CD4-positive, alpha-beta memory T cell (primary cell): ENCODE measurements at regions of chr15 and their contacts with region 1.

Region 1: GRCh38 chr15:78750566-78750965 is 60.7 kb downstream of the ADAMTS7 start:
- DNase-seq: peak in 1 of 5 donors; percentile 5
- H3K4me3 ChIP-seq: no peak overlapping the region
- H3K4me3 Mint-ChIP-seq: peak overlapping the region in 6 of 8 donors; percentile 36 to 73 (median 51)
- H3K27ac ChIP-seq: no peak overlapping the region
- H3K27ac Mint-ChIP-seq: peak overlapping the region in 2 of 7 donors; percentile 46 to 57
- H3K4me1 ChIP-seq: no peaks in the 10 kb centered on the region
- H3K4me1 Mint-ChIP-seq: peaks cover 2 to 9% (median 4%) of the 10 kb centered on the region in 4 donors
- H3K27me3 ChIP-seq: no peaks in the 10 kb centered on the region
- H3K27me3 Mint-ChIP-seq: no peaks in the 10 kb centered on the region

Region 2: GRCh38 chr15:78629031-78629715 is 121.4 kb before region 1 on chr15:
- CTCF ChIA-PET with region 1: no interaction called
- POLR2A ChIA-PET with region 1: no interaction called
- intact Hi-C with region 1: no loop called
- DNase-seq: no peak
- H3K4me3 ChIP-seq: no peak overlapping the region
- H3K4me3 Mint-ChIP-seq: no peak overlapping the region
- H3K27ac ChIP-seq: no peak overlapping the region
- H3K27ac Mint-ChIP-seq: no peak overlapping the region
- H3K4me1 ChIP-seq: no peaks in the 10 kb centered on the region
- H3K4me1 Mint-ChIP-seq: no peaks in the 10 kb centered on the region
- H3K27me3 ChIP-seq: no peaks in the 10 kb centered on the region
- H3K27me3 Mint-ChIP-seq: peaks cover 12 to 44% of the 10 kb centered on the region in 2 donors

Region 3: DNA sequence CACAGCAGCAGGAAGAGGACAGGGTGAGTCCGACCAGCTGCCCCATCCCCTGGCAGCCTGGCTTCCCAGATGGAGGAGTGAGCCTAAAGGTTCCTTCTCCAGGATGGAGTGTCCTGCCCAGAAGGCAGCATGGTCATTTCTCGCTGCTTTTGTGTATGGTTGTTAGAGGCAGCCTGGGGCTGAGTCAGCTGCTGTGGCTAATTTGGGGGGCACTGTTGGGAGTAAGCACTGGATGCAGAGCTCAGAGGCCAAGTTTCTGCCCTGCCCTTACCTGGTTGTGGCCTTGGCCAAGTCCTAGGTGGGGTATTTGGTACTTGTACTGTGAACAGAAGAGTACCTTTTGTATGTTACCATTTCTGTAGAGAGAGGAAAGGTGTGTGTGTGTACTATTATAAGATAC is 17.9 kb before region 1 on chr15:
- CTCF ChIA-PET with region 1: no interaction called
- POLR2A ChIA-PET with region 1: no interaction called
- intact Hi-C with region 1: no loop called
- DNase-seq: no peak
- H3K4me3 ChIP-seq: no peak overlapping the region
- H3K4me3 Mint-ChIP-seq: no peak overlapping the region
- H3K27ac ChIP-seq: no peak overlapping the region
- H3K27ac Mint-ChIP-seq: no peak overlapping the region
- H3K4me1 ChIP-seq: no peaks in the 10 kb centered on the region
- H3K4me1 Mint-ChIP-seq: no peaks in the 10 kb centered on the region
- H3K27me3 ChIP-seq: no peaks in the 10 kb centered on the region
- H3K27me3 Mint-ChIP-seq: peaks cover 8 to 12% of the 10 kb centered on the region in 2 donors

Region 4: DNA sequence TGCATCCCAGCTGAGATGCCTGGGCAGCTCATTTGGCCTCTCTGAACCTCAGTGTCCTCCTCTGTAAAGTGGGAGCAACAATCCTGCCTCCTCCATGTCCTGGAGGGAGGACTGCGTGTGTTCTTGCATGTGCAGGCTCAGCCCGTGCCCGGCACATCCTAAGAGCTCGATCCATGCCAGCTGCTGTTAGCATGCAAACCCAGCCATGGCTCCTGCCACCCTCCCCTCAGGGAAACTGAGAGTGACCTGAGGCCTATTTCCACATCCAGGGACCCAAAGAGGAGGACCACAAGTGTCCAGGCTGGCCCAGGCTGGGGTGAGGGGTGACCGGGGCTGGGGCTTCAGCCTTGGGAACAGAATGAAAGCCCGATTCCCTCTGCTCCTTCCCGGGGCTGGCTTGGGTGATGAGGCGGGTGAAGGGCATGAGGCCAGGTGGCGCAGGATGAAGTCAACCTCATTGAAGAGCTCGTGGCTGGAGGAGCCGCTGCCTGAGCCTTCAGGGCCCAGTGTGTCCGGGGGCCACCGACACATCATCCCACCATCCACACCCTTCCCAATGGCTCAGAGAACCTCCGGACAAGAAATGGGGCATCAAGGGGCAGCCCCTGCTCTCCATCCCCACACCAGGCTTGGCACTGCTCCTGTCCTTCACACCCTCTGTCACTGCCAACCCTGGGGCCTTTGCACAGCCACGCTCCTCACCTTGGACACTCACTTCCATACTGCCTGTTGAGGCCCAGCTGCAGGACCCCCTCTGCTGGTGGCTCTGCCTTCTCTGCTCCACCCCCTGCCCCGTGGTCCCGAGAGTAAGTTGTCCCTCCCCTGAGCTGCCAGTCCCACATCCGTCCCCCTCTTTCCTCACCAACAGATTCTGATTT is 18.2 kb after region 1 on chr15:
- CTCF ChIA-PET with region 1: no interaction called
- POLR2A ChIA-PET with region 1: no interaction called
- intact Hi-C with region 1: no loop called
- DNase-seq: no peak
- H3K4me3 ChIP-seq: no peak overlapping the region
- H3K4me3 Mint-ChIP-seq: no peak overlapping the region
- H3K27ac ChIP-seq: no peak overlapping the region
- H3K27ac Mint-ChIP-seq: peak overlapping the region in 1 of 7 donors; percentile 60
- H3K4me1 ChIP-seq: no peaks in the 10 kb centered on the region
- H3K4me1 Mint-ChIP-seq: no peaks in the 10 kb centered on the region
- H3K27me3 ChIP-seq: no peaks in the 10 kb centered on the region
- H3K27me3 Mint-ChIP-seq: no peaks in the 10 kb centered on the region

Region 5: GRCh38 chr15:78811124-78811824 is 60.7 kb after region 1 on chr15 and contains the start of gene ADAMTS7:
- CTCF ChIA-PET with region 1: interaction called, 3 read pairs
- POLR2A ChIA-PET with region 1: no interaction called
- intact Hi-C with region 1: loop called (anchors 10 kb)
- DNase-seq: peak in 2 of 5 donors; percentile 14 to 30
- H3K4me3 ChIP-seq: peak within 1 kb of the TSS in 1 of 2 donors; percentile 28
- H3K4me3 Mint-ChIP-seq: peak within 1 kb of the TSS; percentile 74 to 90 (median 81)
- H3K27ac ChIP-seq: no peak within 1 kb of the TSS
- H3K27ac Mint-ChIP-seq: peak within 1 kb of the TSS in 1 of 7 donors; percentile 59
- H3K4me1 ChIP-seq: peaks cover 12% of the 10 kb centered on the region
- H3K4me1 Mint-ChIP-seq: peaks cover 9 to 17% (median 13%) of the 10 kb centered on the region in 4 donors
- H3K27me3 ChIP-seq: peaks cover 29% of the 10 kb centered on the region
- H3K27me3 Mint-ChIP-seq: peaks cover 35 to 45% of the 10 kb centered on the region in 2 donors
- total RNA-seq, gene ADAMTS7: not detected